Activated CD4-positive, alpha-beta memory T cell treated with anti-CD3 and anti-CD28 coated beads for 36 hours (primary cell): ENCODE measurements at regions of chr1 and their contacts with region 1.

Region 1: DNA sequence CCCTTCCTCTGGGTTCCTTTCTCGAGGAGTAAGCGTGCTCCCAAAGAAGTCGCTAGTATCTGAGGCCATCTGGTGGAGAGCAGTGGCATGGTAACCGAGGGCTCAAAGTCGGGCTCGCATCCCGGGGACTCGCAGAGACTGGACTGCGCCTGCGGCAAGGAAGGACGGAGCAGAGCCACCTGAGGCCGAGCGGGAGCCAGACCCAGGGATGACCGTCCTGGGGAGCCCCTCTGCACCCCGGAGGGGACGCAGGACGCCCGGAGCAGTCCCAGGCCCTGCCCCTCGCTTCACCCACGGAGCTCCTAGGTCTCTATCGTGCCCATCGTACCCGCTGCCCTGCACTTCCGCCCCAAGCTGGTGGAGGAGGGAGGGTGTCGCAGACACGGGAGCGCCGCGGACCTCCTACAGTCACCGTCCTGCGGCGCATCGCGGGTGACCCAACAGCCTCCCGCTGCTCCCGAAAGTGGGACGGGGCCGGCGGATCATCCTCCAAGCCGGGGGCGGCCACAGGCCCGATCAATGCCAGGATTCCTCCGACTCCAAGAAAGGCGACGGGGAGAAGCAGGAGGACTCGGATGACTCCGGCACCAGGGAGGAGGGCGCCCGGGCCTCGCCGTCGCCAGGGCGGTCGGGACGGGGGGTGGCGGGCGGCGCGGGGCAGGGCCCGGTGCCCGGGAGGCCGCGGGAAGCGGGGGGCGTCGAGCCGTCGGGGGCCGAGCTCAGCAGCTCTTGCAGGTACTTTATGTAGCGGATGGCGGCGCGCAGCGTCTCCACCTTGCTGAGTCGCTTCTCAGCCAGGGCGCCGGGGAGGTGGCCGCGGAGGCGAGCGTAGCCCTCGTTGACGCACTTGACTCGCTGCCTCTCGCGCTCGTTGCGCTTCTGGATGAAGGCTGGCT is 2.3 kb upstream of the CACNA1S start:
- DNase-seq: peak; percentile 89
- H3K4me3 Mint-ChIP-seq: peak overlapping the region; percentile 86
- H3K27ac Mint-ChIP-seq: peak overlapping the region; percentile 6
- H3K4me1 Mint-ChIP-seq: no peaks in the 10 kb centered on the region
- H3K27me3 Mint-ChIP-seq: no peaks in the 10 kb centered on the region

Region 2: GRCh38 chr1:201085916-201086735 is 28.4 kb before region 1 on chr1:
- CTCF ChIA-PET with region 1: interaction called, 42 read pairs
- POLR2A ChIA-PET with region 1: no interaction called
- intact Hi-C with region 1: loop called (anchors 1 kb)
- DNase-seq: peak; percentile 64
- H3K4me3 Mint-ChIP-seq: no peak overlapping the region
- H3K27ac Mint-ChIP-seq: peak overlapping the region; percentile 21
- H3K4me1 Mint-ChIP-seq: no peaks in the 10 kb centered on the region
- H3K27me3 Mint-ChIP-seq: peaks cover 5% of the 10 kb centered on the region